Mammary epithelial cell (primary cell): ENCODE measurements at regions of chr19 and their contacts with region 1.

Region 1: DNA sequence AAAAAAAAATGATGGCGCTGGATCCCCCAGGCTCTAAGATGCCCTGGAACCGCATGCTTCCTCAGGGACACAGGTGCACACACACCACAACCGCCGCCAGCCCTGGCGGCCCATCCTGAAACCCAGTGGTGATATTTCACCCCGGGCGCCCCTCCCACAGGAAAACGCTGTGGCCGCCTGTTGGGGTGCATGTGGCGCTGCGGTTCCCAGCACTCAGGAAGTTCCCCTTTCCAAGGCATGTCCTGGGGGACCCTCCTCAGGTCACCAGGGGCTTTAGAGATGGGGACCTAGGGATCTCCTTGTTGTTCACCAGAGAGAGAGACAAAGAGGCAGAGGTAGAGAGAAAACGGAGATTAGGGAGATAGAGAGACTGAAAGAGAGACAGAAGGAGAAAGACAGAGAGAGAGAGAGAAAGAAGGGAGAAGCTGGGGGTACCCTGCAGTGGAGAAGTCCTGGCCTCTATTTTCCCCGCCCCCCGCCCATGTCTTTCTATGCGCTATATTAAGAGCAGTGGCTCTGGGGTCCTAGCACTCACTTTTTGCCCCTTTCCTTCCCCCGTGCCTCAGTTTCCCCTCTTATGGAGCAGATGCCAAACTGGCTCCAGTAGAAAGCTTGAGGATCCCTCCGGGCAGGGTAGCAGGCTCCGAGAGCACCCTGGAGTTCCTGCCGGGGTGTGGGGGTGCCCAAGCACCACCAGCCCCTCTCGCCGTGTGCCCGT is 2.3 kb downstream of the ADGRE2 start:
- DNase-seq: no peak
- H3K4me3 ChIP-seq: peak overlapping the region; percentile 56 to 70 (median 58)
- H3K27ac ChIP-seq: peak overlapping the region; percentile 22
- H3K4me1 ChIP-seq: peaks cover 3% of the 10 kb centered on the region
- H3K27me3 ChIP-seq: no peaks in the 10 kb centered on the region
- CTCF ChIP-seq: no peak

Region 2: DNA sequence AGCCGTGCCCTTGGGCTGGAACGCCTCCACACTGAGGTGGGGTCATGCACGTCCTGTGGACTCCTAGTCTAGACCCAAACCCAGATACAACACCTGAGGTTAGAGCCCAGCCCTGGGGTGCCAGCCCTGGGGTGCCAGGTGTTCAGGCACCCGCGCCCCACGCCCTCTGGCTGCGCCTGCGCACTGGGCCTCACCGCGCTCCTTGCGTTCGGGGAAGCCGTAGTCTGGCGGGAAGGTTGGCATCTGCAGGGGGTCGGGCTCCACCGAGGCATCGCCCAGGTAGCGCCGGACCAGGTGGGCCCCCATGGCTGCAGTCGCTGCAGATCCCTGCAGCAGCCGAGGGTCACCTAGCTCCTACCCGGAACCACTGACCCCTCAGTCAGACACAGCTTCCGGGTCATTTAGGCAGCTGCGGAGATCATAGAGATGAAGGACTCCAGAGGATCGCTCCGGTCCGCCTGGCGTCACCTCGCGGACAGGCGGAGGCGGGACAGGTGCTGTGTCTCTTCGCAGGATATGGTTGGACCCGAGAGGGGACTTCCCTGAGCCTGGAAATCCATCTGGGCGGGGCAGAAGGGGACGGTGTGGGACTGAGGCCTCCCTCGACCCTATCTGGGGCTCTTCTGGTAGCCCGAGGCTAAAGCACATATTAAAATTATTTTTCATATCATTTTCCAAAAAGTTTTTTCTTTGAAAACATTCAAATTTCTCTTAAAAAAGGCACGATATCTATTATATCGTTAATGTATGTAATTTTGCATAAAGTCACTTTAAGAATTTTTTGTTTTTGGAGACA is 204.1 kb before region 1 on chr19 and contains the start of gene NDUFB7:
- CTCF ChIA-PET with region 1: no interaction called
- dilution Hi-C with region 1: loop called (anchors 10 kb)
- in situ Hi-C with region 1: no loop called
- intact Hi-C with region 1: no loop called
- DNase-seq: peak; percentile 94
- H3K4me3 ChIP-seq: peak within 1 kb of the TSS; percentile 67 to 100 (median 99)
- H3K27ac ChIP-seq: peak within 1 kb of the TSS; percentile 70
- H3K4me1 ChIP-seq: peaks cover 14% of the 10 kb centered on the region
- H3K27me3 ChIP-seq: no peaks in the 10 kb centered on the region
- CTCF ChIP-seq: peak; percentile 68 to 85
- total RNA-seq, gene NDUFB7: 142 to 177 TPM

Region 3: DNA sequence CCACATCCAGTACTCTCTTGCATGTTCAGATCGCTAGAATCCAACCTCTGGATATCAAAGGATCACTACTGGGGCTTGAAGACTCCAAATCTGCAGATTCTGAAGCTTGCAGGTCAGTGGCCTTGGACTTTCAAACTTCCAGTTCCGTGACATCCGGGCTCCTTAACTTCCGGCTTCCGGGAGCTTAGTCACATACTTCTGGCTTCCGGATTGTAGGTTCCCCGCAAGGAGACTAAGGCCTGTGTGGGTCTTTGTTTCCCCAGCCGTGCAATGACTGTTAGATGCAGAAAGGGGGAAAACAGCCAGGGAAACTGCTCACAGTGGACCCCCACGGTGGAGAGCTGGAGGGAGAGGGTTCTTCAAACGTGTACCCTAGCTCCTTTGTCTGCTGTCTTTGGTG is 44.8 kb before region 1 on chr19:
- CTCF ChIA-PET with region 1: no interaction called
- dilution Hi-C with region 1: no loop called
- in situ Hi-C with region 1: no loop called
- intact Hi-C with region 1: no loop called
- DNase-seq: no peak
- H3K4me3 ChIP-seq: no peak overlapping the region
- H3K27ac ChIP-seq: no peak overlapping the region
- H3K4me1 ChIP-seq: no peaks in the 10 kb centered on the region
- H3K27me3 ChIP-seq: no peaks in the 10 kb centered on the region
- CTCF ChIP-seq: no peak

Region 4: GRCh38 chr19:14814982-14815652 is 39.1 kb after region 1 on chr19:
- CTCF ChIA-PET with region 1: no interaction called
- dilution Hi-C with region 1: no loop called
- in situ Hi-C with region 1: no loop called
- intact Hi-C with region 1: no loop called
- DNase-seq: no peak
- H3K4me3 ChIP-seq: no peak overlapping the region
- H3K27ac ChIP-seq: no peak overlapping the region
- H3K4me1 ChIP-seq: no peaks in the 10 kb centered on the region
- H3K27me3 ChIP-seq: no peaks in the 10 kb centered on the region
- CTCF ChIP-seq: no peak

Region 5: DNA sequence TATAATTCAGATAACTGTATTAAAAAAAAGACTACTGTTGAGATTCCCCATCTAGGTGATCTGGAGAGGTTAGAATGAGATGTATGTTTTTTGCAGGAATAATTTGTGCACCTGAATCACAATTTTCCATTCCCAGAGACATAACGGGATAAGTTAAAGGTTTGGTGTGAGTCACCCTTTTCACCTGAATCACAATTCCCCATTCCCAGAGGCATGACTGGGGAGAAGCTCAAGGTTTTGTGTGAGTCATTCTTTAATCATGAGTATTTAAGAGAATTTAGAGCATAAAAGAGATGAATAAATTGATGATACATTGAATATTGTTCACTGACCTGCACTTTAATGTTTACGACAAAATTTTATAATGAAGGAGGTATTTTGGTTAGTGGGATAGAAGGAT is 50.0 kb after region 1 on chr19:
- CTCF ChIA-PET with region 1: no interaction called
- dilution Hi-C with region 1: loop called (anchors 5 kb)
- in situ Hi-C with region 1: no loop called
- intact Hi-C with region 1: no loop called
- DNase-seq: peak; percentile 80
- H3K4me3 ChIP-seq: no peak overlapping the region
- H3K27ac ChIP-seq: no peak overlapping the region
- H3K4me1 ChIP-seq: peaks cover 24% of the 10 kb centered on the region
- H3K27me3 ChIP-seq: no peaks in the 10 kb centered on the region
- CTCF ChIP-seq: no peak